Vagina (tissue), 2 donors: ENCODE measurements at regions of chr15 and their contacts with region 1.

Region 1: GRCh38 chr15:85750319-85750806 is 44.4 kb downstream of the KLHL25 start:
- DNase-seq: no peak
- H3K4me3 ChIP-seq: peak overlapping the region; percentile 14 to 28
- H3K27ac ChIP-seq: peak overlapping the region; percentile 75
- H3K4me1 ChIP-seq: peaks cover 30% of the 10 kb centered on the region
- H3K27me3 ChIP-seq: no peaks in the 10 kb centered on the region
- CTCF ChIP-seq: no peak
- POLR2A ChIP-seq: no peak

Region 2: DNA sequence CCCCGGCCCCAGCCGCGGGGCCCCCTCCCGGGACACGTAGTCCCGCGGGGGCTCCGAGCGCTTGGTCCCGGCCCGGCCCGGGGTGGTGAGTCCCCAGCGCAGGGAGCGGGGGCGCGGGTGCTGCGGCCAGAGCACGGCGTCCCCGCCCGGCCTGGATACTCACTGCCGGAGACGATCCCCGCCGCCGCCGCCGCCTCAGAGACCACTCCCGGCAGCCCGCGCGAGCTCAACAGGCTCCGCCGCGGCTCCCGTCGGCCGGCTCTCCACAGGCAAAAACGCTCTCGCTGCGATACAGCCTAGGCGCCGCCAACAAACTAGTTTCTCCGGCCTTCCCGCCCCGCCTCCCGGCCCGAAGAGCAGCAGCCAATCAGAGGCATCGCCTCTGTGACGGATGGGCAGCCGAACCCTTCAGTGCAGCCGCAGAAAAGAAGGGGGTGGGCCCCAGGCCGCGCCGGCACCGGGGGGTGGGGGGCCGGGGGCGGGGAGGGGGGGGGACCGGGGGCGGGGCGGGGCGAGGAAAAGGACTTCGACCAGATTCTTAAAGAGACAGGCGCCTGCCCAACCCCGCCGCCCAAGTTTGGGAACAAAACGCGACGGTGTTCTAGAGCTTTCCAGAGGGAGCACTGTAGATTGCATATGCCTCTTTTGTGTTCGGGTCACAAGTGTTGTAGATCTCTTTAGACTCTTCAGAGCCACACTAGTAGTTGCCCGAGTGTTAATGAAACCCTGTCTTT is 44.4 kb after region 1 on chr15 and contains the start of gene KLHL25:
- intact Hi-C with region 1: loop called (anchors 5 kb)
- DNase-seq: peak in 1 of 2 donors; percentile 97
- H3K4me3 ChIP-seq: peak within 1 kb of the TSS; percentile 82 to 95
- H3K27ac ChIP-seq: peak within 1 kb of the TSS; percentile 95
- H3K4me1 ChIP-seq: peaks cover 18% of the 10 kb centered on the region
- H3K27me3 ChIP-seq: no peaks in the 10 kb centered on the region
- CTCF ChIP-seq: peak in 1 of 3 experiments; percentile 21
- POLR2A ChIP-seq: peak; percentile 56 to 86
- total RNA-seq, gene KLHL25: 9.6 TPM